Activated CD4-positive, alpha-beta memory T cell treated with anti-CD3 and anti-CD28 coated beads for 36 hours (primary cell): ENCODE measurements at regions of chr22 and their contacts with region 1.

Region 1: DNA sequence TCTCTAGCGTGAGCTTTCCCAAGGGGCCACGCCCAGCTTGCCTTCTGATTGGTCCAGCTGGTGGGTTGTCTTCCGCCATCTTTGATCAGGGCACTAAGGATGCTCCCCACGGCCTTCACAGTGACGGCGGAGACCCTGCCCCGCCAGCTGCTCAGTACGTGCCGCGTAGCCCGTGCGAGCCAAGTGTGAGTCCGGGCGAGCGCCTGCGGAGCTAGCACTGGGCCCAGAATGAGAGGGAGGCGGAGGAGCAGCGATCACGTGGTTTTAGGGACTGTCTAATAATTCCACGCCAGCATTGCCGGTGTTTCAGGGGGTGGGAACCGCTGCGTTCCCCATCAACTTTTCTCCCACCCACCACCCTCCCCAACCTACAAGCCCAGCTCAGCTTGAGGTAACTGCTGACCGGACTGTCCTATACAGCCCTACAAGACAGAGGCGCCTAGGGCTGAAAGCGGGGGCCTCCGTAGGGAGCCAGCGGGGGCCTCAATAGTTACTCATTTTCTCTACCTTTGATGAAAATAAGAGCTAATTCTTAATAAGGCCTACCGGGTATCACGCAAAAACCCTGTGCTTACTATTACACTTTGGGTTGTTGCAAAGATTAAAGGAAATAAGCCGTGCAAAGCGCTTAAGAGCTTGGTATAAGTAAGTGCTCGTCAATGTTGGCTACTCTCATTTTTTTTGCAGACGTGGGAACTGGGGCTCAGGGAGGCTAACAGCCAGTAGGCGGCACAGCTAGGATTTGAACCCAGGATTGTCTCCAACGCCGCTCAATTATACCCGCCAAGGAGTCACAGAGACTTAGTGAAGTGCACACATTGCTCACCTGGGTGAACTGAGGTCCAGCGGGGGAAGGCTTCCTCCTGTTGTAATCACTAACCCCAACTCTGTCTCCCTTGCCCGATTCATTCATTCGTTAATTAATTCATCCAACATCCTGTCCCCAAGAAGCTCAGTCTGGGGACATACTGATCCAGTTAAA is 1.3 kb upstream of the MTFP1 start:
- DNase-seq: peak; percentile 99
- H3K4me3 Mint-ChIP-seq: peak overlapping the region; percentile 90
- H3K27ac Mint-ChIP-seq: peak overlapping the region; percentile 95
- H3K4me1 Mint-ChIP-seq: peaks cover 58% of the 10 kb centered on the region
- H3K27me3 Mint-ChIP-seq: no peaks in the 10 kb centered on the region

Region 2: DNA sequence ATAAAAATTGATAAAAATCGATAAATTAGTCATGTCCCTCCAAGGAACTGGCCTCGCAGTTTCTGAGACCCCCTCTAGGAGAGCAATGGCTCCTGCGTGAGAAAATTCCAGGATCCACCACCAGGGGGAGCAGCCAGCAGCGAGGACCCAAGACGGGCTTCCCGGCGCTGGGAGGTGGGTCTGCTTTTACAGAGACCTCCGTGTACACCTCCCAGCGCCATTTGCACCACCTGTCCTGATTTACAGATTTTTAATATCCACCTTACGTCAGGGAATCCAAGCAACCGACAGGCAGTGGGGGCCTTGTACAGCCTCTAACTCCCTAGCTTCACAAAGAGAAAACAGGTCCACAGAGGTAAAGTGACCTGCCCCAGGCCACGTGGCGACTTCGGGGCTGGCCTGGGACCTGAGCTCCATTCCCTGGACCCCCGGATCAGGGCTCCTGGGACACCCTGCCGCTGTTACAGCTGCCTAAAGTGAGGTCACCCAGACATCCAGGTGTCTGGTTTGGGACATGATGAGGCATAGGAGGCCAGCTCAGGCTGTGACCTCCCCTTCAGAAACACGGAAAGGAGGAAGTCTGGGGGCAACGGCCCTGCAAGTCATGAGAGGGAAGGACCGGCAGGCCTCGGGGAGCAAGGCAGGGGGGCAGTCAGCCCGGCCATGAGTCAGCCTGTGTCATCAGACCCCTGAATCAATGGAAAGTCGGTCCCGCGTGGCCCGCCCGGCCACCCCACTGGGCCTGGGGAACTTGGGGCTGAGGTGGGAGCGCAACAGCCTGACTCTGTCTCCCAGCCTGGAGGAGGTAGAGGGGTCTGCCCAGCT is 161.1 kb before region 1 on chr22:
- CTCF ChIA-PET with region 1: interaction called, 12 read pairs
- POLR2A ChIA-PET with region 1: interaction called, 4 read pairs
- intact Hi-C with region 1: loop called (anchors 1 kb)
- DNase-seq: peak; percentile 86
- H3K4me3 Mint-ChIP-seq: peak overlapping the region; percentile 71
- H3K27ac Mint-ChIP-seq: peak overlapping the region; percentile 69
- H3K4me1 Mint-ChIP-seq: peaks cover 34% of the 10 kb centered on the region
- H3K27me3 Mint-ChIP-seq: no peaks in the 10 kb centered on the region

Region 3: DNA sequence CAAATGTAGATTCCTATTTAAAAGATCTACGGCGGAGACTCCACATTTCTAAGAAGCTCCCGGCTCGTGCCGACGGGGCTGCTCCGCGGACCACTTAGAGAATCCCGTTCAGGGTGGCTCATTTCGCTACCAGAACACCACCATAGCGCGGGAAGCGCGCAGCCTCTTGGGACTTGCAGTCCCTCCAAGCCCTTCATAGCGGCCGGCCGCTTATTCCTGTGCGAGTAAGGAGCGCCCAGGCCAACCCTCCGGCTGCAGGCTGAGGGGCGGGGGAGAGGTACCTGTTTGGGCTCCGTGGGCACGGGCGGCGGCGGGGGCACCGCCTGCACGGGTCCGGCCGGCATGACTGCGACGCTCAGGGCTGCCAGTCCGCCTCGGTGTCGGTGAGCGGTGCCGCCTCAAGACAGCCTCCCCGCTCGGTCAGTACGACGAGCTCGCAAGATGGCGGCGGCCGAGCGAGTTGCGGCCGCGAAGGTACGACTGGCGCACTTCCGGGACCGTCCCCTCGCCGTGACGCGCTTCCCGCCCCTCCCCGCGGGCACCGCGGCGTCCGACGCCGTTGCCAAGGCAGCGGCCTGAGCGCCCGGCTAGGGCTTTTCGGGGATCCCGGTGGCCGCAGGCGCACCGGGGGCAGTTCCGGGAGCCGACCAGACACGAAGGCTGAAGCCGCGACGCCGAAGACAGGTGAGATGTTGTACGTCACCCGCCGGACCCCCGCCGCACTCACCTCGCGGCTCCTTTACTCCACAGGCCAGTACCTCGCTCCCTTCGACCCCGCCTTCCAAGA is 67.6 kb before region 1 on chr22 and contains the starts of genes CCDC157 and SF3A1:
- CTCF ChIA-PET with region 1: interaction called, 5 read pairs
- POLR2A ChIA-PET with region 1: interaction called, 4 read pairs
- intact Hi-C with region 1: loop called (anchors 1 kb)
- DNase-seq: peak; percentile 91
- H3K4me3 Mint-ChIP-seq: peak within 1 kb of the TSS; percentile 93
- H3K27ac Mint-ChIP-seq: peak within 1 kb of the TSS; percentile 85
- H3K4me1 Mint-ChIP-seq: peaks cover 48% of the 10 kb centered on the region
- H3K27me3 Mint-ChIP-seq: no peaks in the 10 kb centered on the region
- total RNA-seq, gene CCDC157: 2.1 to 2.9 TPM
- total RNA-seq, gene SF3A1: 255 to 273 TPM

Region 4: GRCh38 chr22:30396871-30397655 is 27.2 kb before region 1 on chr22 and contains the start of gene SEC14L2:
- CTCF ChIA-PET with region 1: interaction called, 113 read pairs
- POLR2A ChIA-PET with region 1: interaction called, 53 read pairs
- intact Hi-C with region 1: no loop called
- DNase-seq: peak; percentile 74
- H3K4me3 Mint-ChIP-seq: peak within 1 kb of the TSS; percentile 86
- H3K27ac Mint-ChIP-seq: no peak within 1 kb of the TSS
- H3K4me1 Mint-ChIP-seq: peaks cover 29% of the 10 kb centered on the region
- H3K27me3 Mint-ChIP-seq: no peaks in the 10 kb centered on the region
- total RNA-seq, gene SEC14L2: 12.8 to 15.3 TPM

Region 5: GRCh38 chr22:30435674-30436126 is 11.4 kb after region 1 on chr22:
- CTCF ChIA-PET with region 1: interaction called, 22 read pairs
- POLR2A ChIA-PET with region 1: interaction called, 6 read pairs
- intact Hi-C with region 1: loop called (anchors 1 kb)
- DNase-seq: peak; percentile 84
- H3K4me3 Mint-ChIP-seq: peak overlapping the region; percentile 77
- H3K27ac Mint-ChIP-seq: peak overlapping the region; percentile 93
- H3K4me1 Mint-ChIP-seq: peaks cover 20% of the 10 kb centered on the region
- H3K27me3 Mint-ChIP-seq: peaks cover 5% of the 10 kb centered on the region

Region 6: DNA sequence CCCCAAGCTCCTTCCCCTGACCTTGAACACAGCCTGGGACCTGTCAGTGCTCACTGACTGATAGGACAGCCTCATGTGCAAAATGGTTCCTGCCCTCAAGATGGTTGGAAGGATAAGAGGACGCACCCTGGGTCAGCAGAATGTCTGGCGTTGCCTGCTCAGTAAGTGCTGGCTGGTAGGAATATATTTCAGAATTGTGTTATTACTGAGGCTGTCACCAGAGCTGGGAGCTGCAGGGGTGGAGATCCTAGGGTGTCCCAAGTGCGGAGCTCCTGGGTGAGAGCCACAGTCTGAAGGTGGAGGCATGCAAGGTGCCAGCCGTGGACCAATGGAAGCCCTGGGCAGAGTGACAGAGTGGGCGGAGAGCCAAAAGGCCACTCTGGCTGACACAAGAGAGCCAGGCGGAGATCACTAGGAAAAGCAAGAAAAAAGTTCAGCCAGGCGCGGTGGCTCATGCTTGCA is 82.3 kb after region 1 on chr22:
- CTCF ChIA-PET with region 1: no interaction called
- POLR2A ChIA-PET with region 1: no interaction called
- intact Hi-C with region 1: no loop called
- DNase-seq: no peak
- H3K4me3 Mint-ChIP-seq: no peak overlapping the region
- H3K27ac Mint-ChIP-seq: no peak overlapping the region
- H3K4me1 Mint-ChIP-seq: peaks cover 2% of the 10 kb centered on the region
- H3K27me3 Mint-ChIP-seq: peaks cover 30% of the 10 kb centered on the region

Region 7: DNA sequence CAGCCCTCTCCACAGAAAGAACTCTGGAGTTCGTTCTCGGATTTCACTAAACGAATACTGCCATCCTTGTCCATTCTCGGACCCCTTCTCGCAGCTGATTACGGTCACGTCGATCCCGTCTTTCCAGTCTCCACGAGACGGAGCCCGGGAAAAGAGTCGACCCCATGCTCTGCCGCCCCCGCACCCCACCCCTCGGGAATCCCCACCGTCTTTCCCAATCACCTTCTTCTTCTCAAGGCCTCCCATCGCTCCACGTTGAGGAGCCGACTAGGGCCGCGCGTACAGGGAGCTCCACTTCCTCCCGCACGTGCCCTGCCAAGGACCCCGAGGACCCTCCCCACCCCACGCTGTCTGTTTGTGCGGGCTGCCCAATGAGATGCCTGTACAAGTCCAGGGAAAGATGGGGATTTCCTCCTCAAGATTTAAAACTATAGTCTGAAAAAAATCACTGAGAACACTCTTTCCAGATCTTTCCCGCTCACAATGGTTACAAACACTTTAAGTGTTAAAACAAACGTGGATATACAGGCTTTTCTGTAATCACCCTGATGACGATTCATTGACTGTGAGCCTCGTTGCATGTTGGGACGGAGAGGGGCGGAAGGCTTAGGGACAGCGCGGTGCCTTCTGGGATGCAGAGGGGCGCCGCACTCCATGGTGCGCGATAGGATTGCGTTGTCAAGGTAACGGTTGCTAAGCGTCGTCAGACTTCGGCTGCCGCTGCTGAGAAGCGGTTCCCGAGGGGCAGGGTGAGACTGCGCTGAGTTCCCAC is 167.5 kb after region 1 on chr22 and contains the start of gene PES1:
- CTCF ChIA-PET with region 1: no interaction called
- POLR2A ChIA-PET with region 1: no interaction called
- intact Hi-C with region 1: loop called (anchors 1 kb)
- DNase-seq: peak; percentile 96
- H3K4me3 Mint-ChIP-seq: no peak within 1 kb of the TSS
- H3K27ac Mint-ChIP-seq: no peak within 1 kb of the TSS
- H3K4me1 Mint-ChIP-seq: peaks cover 4% of the 10 kb centered on the region
- H3K27me3 Mint-ChIP-seq: peaks cover 7% of the 10 kb centered on the region
- total RNA-seq, gene PES1: 99.3 to 99.6 TPM